Activated naive CD8-positive, alpha-beta T cell treated with anti-CD3 and anti-CD28 coated beads, Interleukin-2, amount 10 ng/mL, durations not matched to agents 7 days and 5 days (primary cell): ENCODE measurements at regions of chr19 and their contacts with region 1.

Region 1: GRCh38 chr19:1275260-1275975 is at the start of gene FAM174C:
- DNase-seq: peak; percentile 97
- ATAC-seq: peak; percentile 83
- H3K4me3 Mint-ChIP-seq: peak within 1 kb of the TSS; percentile 92
- H3K27ac Mint-ChIP-seq: peak within 1 kb of the TSS; percentile 95
- H3K4me1 Mint-ChIP-seq: peaks cover 45% of the 10 kb centered on the region
- H3K27me3 Mint-ChIP-seq: no peaks in the 10 kb centered on the region
- total RNA-seq, gene FAM174C: 44.5 to 48.3 TPM

Region 2: DNA sequence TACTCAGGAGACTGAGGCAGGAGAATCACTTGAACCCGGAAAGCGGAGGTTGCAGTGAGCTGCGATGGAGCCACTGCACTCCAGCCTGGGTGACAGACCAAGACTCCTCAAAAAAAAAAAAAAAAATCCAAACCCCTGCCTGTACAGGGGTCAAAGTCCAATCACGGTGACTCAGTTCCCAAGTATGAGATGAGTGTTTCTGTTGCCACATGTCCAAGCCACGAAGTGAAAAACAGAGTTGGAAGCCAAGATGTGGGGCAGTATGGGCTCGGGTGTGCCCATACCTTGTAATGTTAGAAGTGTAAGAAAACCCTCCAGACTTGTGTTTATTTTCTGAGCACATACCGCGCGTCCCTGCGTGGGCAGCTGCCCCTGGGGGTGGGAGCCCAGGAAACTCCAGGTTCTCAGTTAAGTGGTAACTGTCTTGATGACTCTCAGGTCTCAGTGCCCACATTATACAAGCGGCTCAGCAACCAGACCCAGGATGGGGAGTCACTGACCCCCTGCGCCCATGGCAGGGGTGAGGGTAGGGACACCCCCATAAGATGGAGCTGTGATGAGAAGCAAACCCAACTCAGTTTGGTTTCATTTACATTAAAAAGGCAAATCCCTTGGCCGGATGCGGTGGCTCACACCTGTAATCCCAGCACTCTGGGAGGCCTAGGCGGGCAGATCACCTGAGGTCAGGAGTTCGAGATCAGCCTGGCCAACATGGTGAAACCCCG is 172.8 kb before region 1 on chr19:
- POLR2A ChIA-PET with region 1: no interaction called
- DNase-seq: peak; percentile 46
- ATAC-seq: no peak
- H3K4me3 Mint-ChIP-seq: peak overlapping the region; percentile 61
- H3K27ac Mint-ChIP-seq: peak overlapping the region; percentile 80
- H3K4me1 Mint-ChIP-seq: peaks cover 34% of the 10 kb centered on the region
- H3K27me3 Mint-ChIP-seq: no peaks in the 10 kb centered on the region

Region 3: GRCh38 chr19:1241417-1242095 is 33.9 kb before region 1 on chr19 and contains the start of gene ATP5F1D:
- POLR2A ChIA-PET with region 1: interaction called, 20 read pairs
- DNase-seq: peak; percentile 92
- ATAC-seq: peak; percentile 75
- H3K4me3 Mint-ChIP-seq: peak within 1 kb of the TSS; percentile 85
- H3K27ac Mint-ChIP-seq: peak within 1 kb of the TSS; percentile 93
- H3K4me1 Mint-ChIP-seq: peaks cover 24% of the 10 kb centered on the region
- H3K27me3 Mint-ChIP-seq: peaks cover 15% of the 10 kb centered on the region
- total RNA-seq, gene ATP5F1D: 157 to 161 TPM

Region 4: DNA sequence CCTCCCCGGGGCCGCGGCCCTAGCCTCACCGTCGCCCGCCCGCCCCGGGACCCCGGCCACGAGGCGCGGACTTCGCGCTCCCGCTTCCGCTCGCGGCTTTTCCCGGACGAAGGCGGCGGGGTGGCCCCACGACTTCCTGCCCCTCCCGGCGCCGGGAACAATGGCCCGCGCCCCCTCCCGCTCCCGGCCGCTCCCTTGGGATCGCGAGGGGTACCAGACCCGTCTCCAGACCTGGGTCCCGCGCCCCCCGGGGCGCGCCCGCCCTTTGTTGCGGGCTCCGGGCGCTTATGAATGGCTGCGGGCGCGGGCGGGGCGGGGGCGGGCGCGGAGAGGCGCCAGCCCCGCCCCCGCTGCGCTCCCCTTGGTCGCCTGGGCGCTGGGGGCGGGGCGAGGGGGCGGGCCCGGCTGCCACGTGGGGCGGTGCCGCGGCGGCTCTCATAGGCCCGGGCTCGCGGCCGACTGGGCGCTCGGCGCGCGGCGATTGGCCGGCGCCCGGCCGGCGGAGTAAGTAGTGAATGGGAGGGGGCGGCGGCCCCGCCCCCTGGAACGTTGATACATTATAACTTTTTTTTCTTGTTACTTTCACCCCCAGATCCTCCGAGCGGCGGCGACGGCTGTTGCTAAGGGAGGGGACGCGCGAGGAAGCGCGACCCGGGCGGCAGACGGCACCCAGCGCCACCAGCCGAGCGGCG is 26.0 kb before region 1 on chr19:
- POLR2A ChIA-PET with region 1: interaction called, 20 read pairs
- DNase-seq: peak; percentile 94
- ATAC-seq: peak; percentile 47
- H3K4me3 Mint-ChIP-seq: peak overlapping the region; percentile 82
- H3K27ac Mint-ChIP-seq: peak overlapping the region; percentile 82
- H3K4me1 Mint-ChIP-seq: peaks cover 7% of the 10 kb centered on the region
- H3K27me3 Mint-ChIP-seq: no peaks in the 10 kb centered on the region

Region 5: GRCh38 chr19:1295169-1296012 is 20.0 kb after region 1 on chr19:
- POLR2A ChIA-PET with region 1: no interaction called
- DNase-seq: peak; percentile 66
- ATAC-seq: peak; percentile 38
- H3K4me3 Mint-ChIP-seq: no peak overlapping the region
- H3K27ac Mint-ChIP-seq: no peak overlapping the region
- H3K4me1 Mint-ChIP-seq: no peaks in the 10 kb centered on the region
- H3K27me3 Mint-ChIP-seq: peaks cover 11% of the 10 kb centered on the region